Breast epithelium (tissue), 4 donors: ENCODE measurements at regions of chr2 and their contacts with region 1.

Region 1: DNA sequence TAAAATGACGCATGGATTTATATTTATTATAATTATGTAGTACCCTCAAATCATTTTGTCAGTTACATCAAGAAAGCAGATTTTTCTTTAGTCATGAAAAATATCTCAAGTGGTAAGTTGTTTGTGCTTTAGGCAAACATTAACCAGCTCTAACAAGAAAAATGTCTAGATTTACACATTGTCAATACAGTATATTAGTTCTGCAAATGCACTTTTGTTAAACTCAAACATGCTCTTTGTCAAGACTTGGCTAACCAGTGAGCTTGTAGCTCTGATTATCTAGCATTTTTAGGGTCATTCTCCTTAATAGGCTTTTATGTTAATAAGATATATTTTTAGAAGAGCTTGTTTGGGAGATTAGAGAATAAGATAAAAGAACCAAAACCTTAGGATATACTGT is 32.7 kb downstream of the SCRN3 start:
- DNase-seq: no peak
- H3K4me3 ChIP-seq: no peak overlapping the region
- H3K27ac ChIP-seq: no peak overlapping the region
- H3K4me1 ChIP-seq: no peaks in the 10 kb centered on the region
- H3K27me3 ChIP-seq: no peaks in the 10 kb centered on the region
- CTCF ChIP-seq: no peak
- POLR2A ChIP-seq: no peak

Region 2: DNA sequence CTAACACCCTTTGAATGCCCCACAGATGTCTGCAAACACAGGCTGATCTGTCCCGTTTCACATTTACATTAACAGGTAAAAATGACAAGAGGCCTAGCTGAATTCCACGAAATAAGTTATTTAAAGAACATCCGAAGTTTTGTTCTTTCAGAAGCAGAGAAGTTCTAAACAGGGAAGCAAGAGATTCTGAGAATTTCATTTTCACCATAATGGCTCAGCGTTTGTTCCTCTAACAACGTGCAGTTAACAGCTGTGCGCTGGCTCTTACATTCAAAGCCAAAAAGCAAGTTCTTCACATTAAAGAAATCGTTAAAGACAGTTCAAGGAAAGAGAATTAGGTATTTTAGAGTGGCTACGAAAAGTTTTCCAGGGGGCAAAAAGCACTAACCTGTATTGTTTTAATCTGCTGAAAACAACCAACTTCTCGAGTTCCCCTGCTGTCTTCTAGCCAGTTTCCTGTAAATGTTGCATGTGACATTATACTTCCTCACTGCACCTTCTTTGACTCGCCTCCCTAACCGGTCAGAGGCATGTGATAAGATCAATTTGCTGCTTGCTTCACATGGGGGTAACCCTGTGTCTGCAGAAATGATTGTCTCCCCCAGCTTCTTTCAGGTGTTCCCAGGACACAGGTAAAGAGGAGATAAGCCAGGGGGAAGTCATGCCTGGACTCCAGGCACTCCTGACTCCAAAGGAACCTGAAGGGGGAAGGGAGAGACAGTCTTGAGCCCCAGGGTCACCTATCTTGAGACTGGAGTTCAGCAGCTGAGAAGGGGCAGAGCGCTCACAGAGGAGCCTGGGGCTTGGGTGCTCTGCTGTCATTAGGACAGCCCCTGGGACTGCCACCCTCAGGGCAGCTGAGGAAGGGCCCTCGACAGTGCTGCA is 206.2 kb after region 1 on chr2:
- intact Hi-C with region 1: loop called (anchors 5 kb)
- DNase-seq: no peak
- H3K4me3 ChIP-seq: peak overlapping the region; percentile 23 to 29 (median 28)
- H3K27ac ChIP-seq: peak overlapping the region; percentile 68 to 88
- H3K4me1 ChIP-seq: no peaks in the 10 kb centered on the region
- H3K27me3 ChIP-seq: no peaks in the 10 kb centered on the region
- CTCF ChIP-seq: no peak
- POLR2A ChIP-seq: no peak

Region 3: DNA sequence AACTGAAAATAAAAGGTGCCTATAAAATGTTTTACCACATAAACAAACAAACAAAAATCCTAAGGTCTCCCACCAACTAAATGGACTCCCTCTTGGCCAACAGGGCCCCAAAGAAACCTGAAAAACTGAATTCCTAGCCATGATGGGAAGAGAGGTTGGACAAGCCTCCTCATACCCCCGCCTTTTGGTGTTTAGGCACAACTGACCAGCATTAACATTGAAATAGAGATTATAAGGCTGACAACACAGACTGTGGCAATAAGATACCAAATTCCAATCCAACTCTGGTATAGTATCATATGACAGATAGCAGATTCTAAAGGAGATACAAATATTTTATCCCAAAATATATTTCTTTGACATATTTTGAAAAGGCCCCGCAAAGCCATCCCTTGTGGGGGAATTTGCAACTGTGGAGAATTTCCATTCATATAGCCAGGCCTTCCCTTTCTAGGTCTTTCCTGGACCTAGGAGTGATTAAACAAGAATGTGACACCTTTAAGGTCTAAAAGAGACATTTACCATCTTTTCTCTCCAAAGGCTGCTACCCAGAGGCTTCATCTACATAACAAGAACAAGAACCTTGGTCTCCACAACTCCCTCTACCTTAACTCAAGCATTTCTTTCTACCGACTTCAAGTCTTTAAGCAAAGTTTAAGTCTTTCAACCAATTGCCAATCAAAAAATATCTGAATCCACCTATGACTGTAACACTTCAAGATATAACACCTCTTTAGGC is 497.0 kb after region 1 on chr2:
- intact Hi-C with region 1: no loop called
- DNase-seq: no peak
- H3K4me3 ChIP-seq: no peak overlapping the region
- H3K27ac ChIP-seq: no peak overlapping the region
- H3K4me1 ChIP-seq: no peaks in the 10 kb centered on the region
- H3K27me3 ChIP-seq: no peaks in the 10 kb centered on the region
- CTCF ChIP-seq: no peak
- POLR2A ChIP-seq: no peak

Region 4: DNA sequence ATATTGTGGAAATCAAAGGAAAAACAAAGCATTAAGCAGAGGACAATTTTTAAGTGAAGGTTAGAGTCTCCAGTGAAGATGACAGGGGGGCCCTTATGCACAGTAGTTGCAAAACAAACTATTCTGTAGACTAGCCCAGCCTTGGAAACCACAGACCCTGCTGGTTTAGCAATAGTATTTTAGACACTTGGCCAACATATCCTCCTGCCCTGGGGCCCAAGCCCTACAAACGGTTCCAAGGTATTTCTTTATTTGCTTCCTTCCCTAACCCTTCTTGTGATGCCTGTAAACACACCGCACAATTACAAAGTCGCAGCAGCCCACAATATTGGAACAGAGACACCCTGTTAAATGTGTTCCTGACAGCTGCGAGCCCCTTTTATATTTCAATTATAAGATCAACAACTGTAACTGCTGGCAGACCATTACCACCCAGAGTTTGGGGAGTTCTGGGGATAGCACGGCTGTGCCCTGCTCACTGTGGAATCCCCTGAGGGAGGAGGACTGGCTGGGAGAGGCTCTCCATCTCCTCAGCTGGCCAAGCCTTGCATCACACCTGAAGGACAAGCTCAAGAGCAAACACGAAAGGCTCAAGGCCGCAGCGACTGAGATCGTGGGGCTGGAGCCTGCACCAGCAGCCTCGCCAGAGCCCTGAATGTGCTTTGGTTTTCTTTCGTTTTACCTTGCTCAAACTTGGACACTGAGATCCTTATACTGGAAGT is 1035.5 kb after region 1 on chr2:
- intact Hi-C with region 1: no loop called
- DNase-seq: peak in 1 of 2 donors; percentile 70
- H3K4me3 ChIP-seq: peak overlapping the region in 1 of 3 donors; percentile 9
- H3K27ac ChIP-seq: peak overlapping the region; percentile 60 to 66
- H3K4me1 ChIP-seq: no peaks in the 10 kb centered on the region
- H3K27me3 ChIP-seq: no peaks in the 10 kb centered on the region
- CTCF ChIP-seq: no peak
- POLR2A ChIP-seq: no peak